MCF 10A (cell line): ENCODE measurements at regions of chr11 and their contacts with region 1.

Region 1: DNA sequence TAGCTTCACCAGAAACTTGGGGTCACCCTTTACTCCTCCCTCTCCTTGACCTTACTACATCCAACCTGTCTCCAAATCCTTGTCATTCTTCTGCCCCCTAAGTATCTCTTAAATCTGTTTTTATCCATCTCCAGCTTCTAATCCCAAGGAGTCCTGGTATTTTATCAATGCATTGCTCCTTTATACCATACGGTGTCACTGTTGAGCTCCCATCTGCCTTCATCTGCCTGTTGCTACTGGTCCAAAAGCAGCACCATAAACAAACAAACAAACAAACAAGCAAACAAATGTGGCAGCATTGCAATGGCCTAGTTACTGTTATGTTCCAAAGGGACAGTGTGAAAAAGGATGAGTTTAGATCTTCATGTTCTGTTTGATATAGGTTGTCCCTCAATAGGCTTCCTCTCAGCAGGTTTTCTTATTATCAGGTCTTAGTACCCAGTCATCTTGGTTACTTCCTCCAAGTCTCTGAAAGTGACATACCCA is 34.2 kb downstream of the DNHD1 start:
- DNase-seq: peak; percentile 56
- H3K4me3 Mint-ChIP-seq: no peak overlapping the region
- H3K27ac Mint-ChIP-seq: no peak overlapping the region
- H3K4me1 Mint-ChIP-seq: no peaks in the 10 kb centered on the region
- H3K27me3 Mint-ChIP-seq: no peaks in the 10 kb centered on the region
- CTCF ChIP-seq: peak; percentile 74

Region 2: GRCh38 chr11:6431861-6432260 is 99.4 kb before region 1 on chr11:
- CTCF ChIA-PET with region 1: no interaction called
- POLR2A ChIA-PET with region 1: no interaction called
- intact Hi-C with region 1: no loop called
- DNase-seq: peak; percentile 98
- H3K4me3 Mint-ChIP-seq: no peak overlapping the region
- H3K27ac Mint-ChIP-seq: no peak overlapping the region
- H3K4me1 Mint-ChIP-seq: peaks cover 12% of the 10 kb centered on the region
- H3K27me3 Mint-ChIP-seq: no peaks in the 10 kb centered on the region
- CTCF ChIP-seq: no peak

Region 3: GRCh38 chr11:6544921-6545850 is 13.9 kb after region 1 on chr11:
- CTCF ChIA-PET with region 1: interaction called, 26 read pairs
- POLR2A ChIA-PET with region 1: interaction called, 6 read pairs
- intact Hi-C with region 1: no loop called
- DNase-seq: no peak
- H3K4me3 Mint-ChIP-seq: no peak overlapping the region
- H3K27ac Mint-ChIP-seq: no peak overlapping the region
- H3K4me1 Mint-ChIP-seq: no peaks in the 10 kb centered on the region
- H3K27me3 Mint-ChIP-seq: no peaks in the 10 kb centered on the region
- CTCF ChIP-seq: no peak

Region 4: DNA sequence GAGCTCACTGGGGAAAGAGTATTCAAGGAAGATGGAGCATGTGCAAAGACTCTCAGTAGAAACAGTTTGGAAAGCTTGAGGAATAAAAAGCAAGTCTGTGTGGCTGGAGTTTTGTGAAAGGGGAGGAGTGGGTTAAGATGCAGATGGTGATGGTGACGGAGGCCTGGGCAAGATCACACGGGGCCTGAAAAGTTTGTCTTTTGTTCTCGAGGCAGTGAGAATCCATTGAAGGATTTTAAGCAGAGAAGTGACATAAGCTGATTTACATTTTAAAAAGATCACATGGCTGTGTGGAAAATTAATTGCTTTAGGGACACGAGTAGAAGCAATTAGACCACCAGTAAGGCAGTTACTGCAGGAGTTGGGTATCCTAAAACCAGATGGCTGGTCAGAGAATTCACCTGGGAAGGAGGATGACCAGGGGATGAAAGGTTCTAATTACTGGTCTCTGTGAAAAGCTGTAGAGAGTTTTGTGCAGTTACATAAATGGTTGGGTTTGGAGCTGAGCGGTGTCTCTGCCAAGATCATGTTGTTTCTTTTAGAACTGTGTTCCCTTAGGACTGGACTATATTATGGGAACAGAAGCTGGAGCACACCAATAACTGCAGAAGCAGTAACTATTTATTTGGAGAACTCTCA is 65.0 kb after region 1 on chr11:
- CTCF ChIA-PET with region 1: interaction called, 14 read pairs
- POLR2A ChIA-PET with region 1: no interaction called
- intact Hi-C with region 1: no loop called
- DNase-seq: no peak
- H3K4me3 Mint-ChIP-seq: no peak overlapping the region
- H3K27ac Mint-ChIP-seq: no peak overlapping the region
- H3K4me1 Mint-ChIP-seq: peaks cover 8% of the 10 kb centered on the region
- H3K27me3 Mint-ChIP-seq: no peaks in the 10 kb centered on the region
- CTCF ChIP-seq: no peak

Region 5: GRCh38 chr11:6667733-6668374 is 136.5 kb after region 1 on chr11:
- CTCF ChIA-PET with region 1: no interaction called
- POLR2A ChIA-PET with region 1: interaction called, 3 read pairs
- intact Hi-C with region 1: loop called (anchors 1 kb)
- DNase-seq: peak; percentile 43
- H3K4me3 Mint-ChIP-seq: no peak overlapping the region
- H3K27ac Mint-ChIP-seq: no peak overlapping the region
- H3K4me1 Mint-ChIP-seq: no peaks in the 10 kb centered on the region
- H3K27me3 Mint-ChIP-seq: peaks cover 13% of the 10 kb centered on the region
- CTCF ChIP-seq: peak; percentile 43

Region 6: GRCh38 chr11:6705905-6706535 is 174.7 kb after region 1 on chr11:
- CTCF ChIA-PET with region 1: interaction called, 82 read pairs
- POLR2A ChIA-PET with region 1: no interaction called
- intact Hi-C with region 1: loop called (anchors 1 kb)
- DNase-seq: peak; percentile 65
- H3K4me3 Mint-ChIP-seq: no peak overlapping the region
- H3K27ac Mint-ChIP-seq: no peak overlapping the region
- H3K4me1 Mint-ChIP-seq: no peaks in the 10 kb centered on the region
- H3K27me3 Mint-ChIP-seq: no peaks in the 10 kb centered on the region
- CTCF ChIP-seq: peak; percentile 82